Activated CD8-positive, alpha-beta T cell treated with anti-CD3 and anti-CD28 coated beads for 36 hours (primary cell): ENCODE measurements at regions of chr2 and their contacts with region 1.

Region 1: GRCh38 chr2:177552422-177553175 is 160.0 kb downstream of the AGPS start:
- DNase-seq: peak; percentile 92
- ATAC-seq: peak; percentile 94
- H3K4me3 Mint-ChIP-seq: peak overlapping the region; percentile 98
- H3K27ac Mint-ChIP-seq: peak overlapping the region; percentile 98
- H3K4me1 Mint-ChIP-seq: peaks cover 9% of the 10 kb centered on the region
- H3K27me3 Mint-ChIP-seq: no peaks in the 10 kb centered on the region
- CTCF ChIP-seq: no peak

Region 2: GRCh38 chr2:177585234-177585863 is 32.8 kb after region 1 on chr2:
- CTCF ChIA-PET with region 1: no interaction called
- POLR2A ChIA-PET with region 1: no interaction called
- intact Hi-C with region 1: no loop called
- DNase-seq: no peak
- ATAC-seq: no peak
- H3K4me3 Mint-ChIP-seq: no peak overlapping the region
- H3K27ac Mint-ChIP-seq: no peak overlapping the region
- H3K4me1 Mint-ChIP-seq: no peaks in the 10 kb centered on the region
- H3K27me3 Mint-ChIP-seq: peaks cover 1% of the 10 kb centered on the region
- CTCF ChIP-seq: no peak

Region 3: DNA sequence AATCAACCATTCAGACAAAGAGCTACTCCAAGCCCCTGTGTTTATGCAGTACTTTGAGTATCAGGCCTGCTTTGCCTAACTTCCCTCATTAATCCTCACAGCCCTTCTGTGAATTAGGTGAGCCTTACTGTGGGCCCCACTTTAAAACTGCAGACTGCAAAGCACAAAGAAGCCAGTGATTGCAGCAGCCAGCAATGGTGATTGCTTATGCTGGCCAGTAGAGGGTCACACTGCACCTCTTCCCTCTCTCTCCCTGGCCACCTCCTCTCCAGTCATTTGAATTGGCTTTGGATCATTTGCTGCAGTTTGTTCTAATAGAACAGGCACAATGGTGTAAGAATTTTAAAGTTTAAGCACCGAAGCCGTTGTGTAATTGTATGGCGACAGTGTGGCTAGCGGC is 69.9 kb after region 1 on chr2:
- CTCF ChIA-PET with region 1: no interaction called
- POLR2A ChIA-PET with region 1: no interaction called
- intact Hi-C with region 1: loop called (anchors 5 kb)
- DNase-seq: no peak
- ATAC-seq: no peak
- H3K4me3 Mint-ChIP-seq: no peak overlapping the region
- H3K27ac Mint-ChIP-seq: no peak overlapping the region
- H3K4me1 Mint-ChIP-seq: no peaks in the 10 kb centered on the region
- H3K27me3 Mint-ChIP-seq: no peaks in the 10 kb centered on the region
- CTCF ChIP-seq: no peak